ENCODE measurements at regions of chr15 and their contacts with region 1.

Region 1: GRCh38 chr15:99473981-99474906 is 91.5 kb upstream of the MEF2A start:
- DNase-seq: no peak
- CTCF ChIP-seq: no peak

Region 2: DNA sequence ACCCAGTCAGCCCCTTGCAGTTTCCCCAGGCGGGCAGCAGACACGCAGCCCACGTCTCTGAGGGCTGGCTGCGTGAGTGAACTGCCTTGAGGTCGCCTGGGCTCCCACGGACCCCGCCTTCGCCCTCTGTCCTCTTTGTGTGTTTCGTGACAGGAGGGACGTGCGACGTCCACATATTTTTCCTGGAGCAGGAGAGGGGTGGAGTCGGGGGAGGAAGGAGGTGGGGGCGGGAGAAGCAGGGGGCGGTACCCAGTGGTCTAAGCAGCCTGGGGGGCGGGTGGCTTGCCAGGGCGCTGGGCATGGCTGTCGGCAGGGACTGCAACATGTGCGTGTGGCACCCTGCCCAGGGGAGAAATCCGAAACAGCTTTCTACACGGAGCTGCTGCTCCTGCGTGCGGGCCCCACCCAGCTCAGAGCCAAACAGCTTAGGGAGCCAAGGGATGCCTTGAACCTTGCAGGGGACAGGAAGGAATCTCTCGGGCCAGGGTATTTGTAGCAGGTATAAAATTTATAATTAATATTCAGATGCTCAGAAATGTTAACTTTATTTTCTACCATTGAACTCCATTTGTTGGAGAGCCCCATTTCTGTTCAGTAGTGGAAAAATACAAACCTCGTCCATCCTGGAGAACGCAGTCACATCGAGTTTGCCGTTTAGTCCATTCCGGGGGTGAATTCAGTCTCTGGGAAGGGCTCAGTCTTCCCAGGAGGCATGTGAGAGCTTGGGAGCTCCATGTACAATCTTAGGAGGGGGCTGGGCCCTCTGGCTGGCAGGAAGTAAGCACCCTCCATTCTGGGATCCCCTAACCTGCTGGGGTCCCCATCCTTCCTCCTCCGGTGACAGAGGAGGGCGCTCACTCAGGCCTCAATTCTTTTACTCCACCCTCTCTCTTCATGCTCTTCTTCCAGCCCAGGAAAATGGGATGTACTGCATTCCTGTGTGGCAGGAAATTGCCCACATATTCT is 12.4 kb after region 1 on chr15:
- CTCF ChIA-PET with region 1: interaction called, 14 read pairs
- POLR2A ChIA-PET with region 1: no interaction called
- DNase-seq: no peak
- CTCF ChIP-seq: no peak

Measured in GM10248 (cell line).